Endothelial cell of umbilical vein (primary cell): ENCODE measurements at regions of chr5 and their contacts with region 1.

Region 1: GRCh38 chr5:217860-218456 is at the starts of genes CCDC127 and SDHA:
- DNase-seq: peak; percentile 97
- H3K4me3 ChIP-seq: peak within 1 kb of the TSS; percentile 86 to 95 (median 94)
- H3K27ac ChIP-seq: peak within 1 kb of the TSS; percentile 70
- H3K4me1 ChIP-seq: peaks cover 37% of the 10 kb centered on the region
- H3K27me3 ChIP-seq: no peaks in the 10 kb centered on the region
- CTCF ChIP-seq: peak; percentile 29 to 56
- POLR2A ChIP-seq: peak; percentile 65
- total RNA-seq, gene CCDC127: 5.3 and 6.3 TPM in 2 replicates
- total RNA-seq, gene SDHA: 142 and 153 TPM in 2 replicates

Region 2: DNA sequence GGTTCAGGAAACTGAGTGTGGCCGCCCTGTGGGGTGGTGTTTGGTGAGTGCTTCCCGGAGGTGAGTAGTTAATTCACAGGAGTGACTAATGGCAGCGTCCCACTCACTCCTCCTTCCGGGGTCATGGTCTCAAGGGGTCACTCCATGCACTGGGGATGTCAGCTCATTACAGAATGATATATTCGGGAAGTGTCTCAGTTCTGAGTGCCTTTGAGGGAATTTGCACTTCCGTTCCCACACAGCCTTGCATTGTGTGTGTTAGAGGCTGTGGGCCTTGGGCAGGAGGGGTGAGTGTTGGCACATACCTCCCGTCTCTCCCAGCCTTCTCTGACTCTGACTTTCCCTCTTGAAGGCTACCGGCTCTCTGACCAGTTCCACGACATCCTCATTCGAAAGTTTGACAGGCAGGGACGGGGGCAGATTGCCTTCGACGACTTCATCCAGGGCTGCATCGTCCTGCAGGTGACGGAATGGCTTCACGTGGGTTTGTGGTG is 93.0 kb after region 1 on chr5:
- CTCF ChIA-PET with region 1: no interaction called
- POLR2A ChIA-PET with region 1: no interaction called
- dilution Hi-C with region 1: no loop called
- intact Hi-C with region 1: loop called (anchors 2 kb)
- DNase-seq: peak; percentile 88
- H3K4me3 ChIP-seq: no peak overlapping the region
- H3K27ac ChIP-seq: peak overlapping the region; percentile 88
- H3K4me1 ChIP-seq: peaks cover 17% of the 10 kb centered on the region
- H3K27me3 ChIP-seq: no peaks in the 10 kb centered on the region
- CTCF ChIP-seq: no peak
- POLR2A ChIP-seq: no peak